ENCODE measurements at regions of chr6 and their contacts with region 1.

Region 1: GRCh38 chr6:15691250-15691869 is 28.5 kb upstream of the DTNBP1 start:
- DNase-seq: peak; percentile 86
- ATAC-seq: peak; percentile 99
- H3K4me3 Mint-ChIP-seq: peak overlapping the region; percentile 11
- H3K27ac Mint-ChIP-seq: peak overlapping the region; percentile 42
- H3K4me1 Mint-ChIP-seq: peaks cover 14% of the 10 kb centered on the region
- H3K27me3 Mint-ChIP-seq: peaks cover 6% of the 10 kb centered on the region
- CTCF ChIP-seq: peak; percentile 99

Region 2: GRCh38 chr6:15708231-15708630 is 16.9 kb after region 1 on chr6:
- CTCF ChIA-PET with region 1: interaction called, 29 read pairs
- POLR2A ChIA-PET with region 1: no interaction called
- intact Hi-C with region 1: no loop called
- DNase-seq: no peak
- ATAC-seq: no peak
- H3K4me3 Mint-ChIP-seq: no peak overlapping the region
- H3K27ac Mint-ChIP-seq: no peak overlapping the region
- H3K4me1 Mint-ChIP-seq: no peaks in the 10 kb centered on the region
- H3K27me3 Mint-ChIP-seq: peaks cover 8% of the 10 kb centered on the region
- CTCF ChIP-seq: no peak

Region 3: GRCh38 chr6:15804174-15805154 is 113.1 kb after region 1 on chr6:
- CTCF ChIA-PET with region 1: no interaction called
- POLR2A ChIA-PET with region 1: no interaction called
- intact Hi-C with region 1: no loop called
- DNase-seq: no peak
- ATAC-seq: no peak
- H3K4me3 Mint-ChIP-seq: no peak overlapping the region
- H3K27ac Mint-ChIP-seq: no peak overlapping the region
- H3K4me1 Mint-ChIP-seq: no peaks in the 10 kb centered on the region
- H3K27me3 Mint-ChIP-seq: no peaks in the 10 kb centered on the region
- CTCF ChIP-seq: no peak

Region 4: DNA sequence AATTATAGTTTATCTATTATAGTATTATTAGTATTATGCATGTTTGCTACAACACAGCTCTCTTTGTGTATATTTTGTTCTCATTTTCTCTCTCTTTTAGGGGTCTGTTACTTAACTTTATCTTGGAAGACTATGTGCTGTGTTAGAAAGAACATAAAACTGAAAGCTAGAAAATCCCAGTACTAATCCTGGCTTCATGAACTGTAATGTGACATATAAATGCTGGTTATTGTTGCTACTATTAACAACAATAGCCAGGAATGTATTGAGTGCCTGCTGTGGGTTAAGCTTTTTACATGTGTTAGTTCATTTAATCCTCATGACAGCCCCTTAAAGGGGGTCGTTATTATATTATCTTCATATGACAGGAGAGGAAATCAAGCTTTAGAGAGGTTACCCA is 141.5 kb after region 1 on chr6:
- CTCF ChIA-PET with region 1: no interaction called
- POLR2A ChIA-PET with region 1: no interaction called
- intact Hi-C with region 1: no loop called
- DNase-seq: no peak
- ATAC-seq: no peak
- H3K4me3 Mint-ChIP-seq: no peak overlapping the region
- H3K27ac Mint-ChIP-seq: no peak overlapping the region
- H3K4me1 Mint-ChIP-seq: no peaks in the 10 kb centered on the region
- H3K27me3 Mint-ChIP-seq: peaks cover 2% of the 10 kb centered on the region
- CTCF ChIP-seq: no peak

Region 5: GRCh38 chr6:16128759-16129622 is 437.6 kb after region 1 on chr6 and contains the start of gene MYLIP:
- CTCF ChIA-PET with region 1: interaction called, 15 read pairs
- POLR2A ChIA-PET with region 1: no interaction called
- intact Hi-C with region 1: no loop called
- DNase-seq: peak; percentile 97
- ATAC-seq: peak; percentile 83
- H3K4me3 Mint-ChIP-seq: peak within 1 kb of the TSS; percentile 88
- H3K27ac Mint-ChIP-seq: peak within 1 kb of the TSS; percentile 91
- H3K4me1 Mint-ChIP-seq: peaks cover 22% of the 10 kb centered on the region
- H3K27me3 Mint-ChIP-seq: peaks cover 3% of the 10 kb centered on the region
- CTCF ChIP-seq: peak; percentile 60
- total RNA-seq, gene MYLIP: 7.7 to 8.1 TPM

Region 6: GRCh38 chr6:16206595-16207037 is 515.3 kb after region 1 on chr6:
- CTCF ChIA-PET with region 1: interaction called, 33 read pairs
- POLR2A ChIA-PET with region 1: no interaction called
- intact Hi-C with region 1: loop called (anchors 1 kb)
- DNase-seq: peak; percentile 56
- ATAC-seq: peak; percentile 79
- H3K4me3 Mint-ChIP-seq: no peak overlapping the region
- H3K27ac Mint-ChIP-seq: no peak overlapping the region
- H3K4me1 Mint-ChIP-seq: no peaks in the 10 kb centered on the region
- H3K27me3 Mint-ChIP-seq: peaks cover 5% of the 10 kb centered on the region
- CTCF ChIP-seq: peak; percentile 98